ENCODE measurements at regions of chr14 and their contacts with region 1.

Region 1: GRCh38 chr14:85463512-85463911 is 66.4 kb upstream of the FLRT2 start:
- DNase-seq: no peak
- H3K4me3 ChIP-seq: no peak overlapping the region
- H3K27ac ChIP-seq: no peak overlapping the region
- H3K4me1 ChIP-seq: no peaks in the 10 kb centered on the region
- H3K27me3 ChIP-seq: no peaks in the 10 kb centered on the region
- CTCF ChIP-seq: no peak
- POLR2A ChIP-seq: no peak

Region 2: GRCh38 chr14:85415015-85415712 is 48.3 kb before region 1 on chr14:
- intact Hi-C with region 1: no loop called
- DNase-seq: peak in 1 of 2 donors; percentile 65
- H3K4me3 ChIP-seq: peak overlapping the region in 2 of 3 donors; percentile 27 to 34
- H3K27ac ChIP-seq: peak overlapping the region; percentile 50 to 74
- H3K4me1 ChIP-seq: no peaks in the 10 kb centered on the region
- H3K27me3 ChIP-seq: no peaks in the 10 kb centered on the region
- CTCF ChIP-seq: peak in 2 of 3 donors; percentile 11 to 31
- POLR2A ChIP-seq: no peak

Region 3: GRCh38 chr14:85508863-85509262 is 45.4 kb after region 1 on chr14:
- intact Hi-C with region 1: no loop called
- DNase-seq: no peak
- H3K4me3 ChIP-seq: no peak overlapping the region
- H3K27ac ChIP-seq: no peak overlapping the region
- H3K4me1 ChIP-seq: no peaks in the 10 kb centered on the region
- H3K27me3 ChIP-seq: no peaks in the 10 kb centered on the region
- CTCF ChIP-seq: no peak
- POLR2A ChIP-seq: no peak

Region 4: GRCh38 chr14:85542623-85543022 is 79.1 kb after region 1 on chr14:
- intact Hi-C with region 1: no loop called
- DNase-seq: no peak
- H3K4me3 ChIP-seq: no peak overlapping the region
- H3K27ac ChIP-seq: no peak overlapping the region
- H3K4me1 ChIP-seq: no peaks in the 10 kb centered on the region
- H3K27me3 ChIP-seq: no peaks in the 10 kb centered on the region
- CTCF ChIP-seq: no peak
- POLR2A ChIP-seq: no peak

Region 5: DNA sequence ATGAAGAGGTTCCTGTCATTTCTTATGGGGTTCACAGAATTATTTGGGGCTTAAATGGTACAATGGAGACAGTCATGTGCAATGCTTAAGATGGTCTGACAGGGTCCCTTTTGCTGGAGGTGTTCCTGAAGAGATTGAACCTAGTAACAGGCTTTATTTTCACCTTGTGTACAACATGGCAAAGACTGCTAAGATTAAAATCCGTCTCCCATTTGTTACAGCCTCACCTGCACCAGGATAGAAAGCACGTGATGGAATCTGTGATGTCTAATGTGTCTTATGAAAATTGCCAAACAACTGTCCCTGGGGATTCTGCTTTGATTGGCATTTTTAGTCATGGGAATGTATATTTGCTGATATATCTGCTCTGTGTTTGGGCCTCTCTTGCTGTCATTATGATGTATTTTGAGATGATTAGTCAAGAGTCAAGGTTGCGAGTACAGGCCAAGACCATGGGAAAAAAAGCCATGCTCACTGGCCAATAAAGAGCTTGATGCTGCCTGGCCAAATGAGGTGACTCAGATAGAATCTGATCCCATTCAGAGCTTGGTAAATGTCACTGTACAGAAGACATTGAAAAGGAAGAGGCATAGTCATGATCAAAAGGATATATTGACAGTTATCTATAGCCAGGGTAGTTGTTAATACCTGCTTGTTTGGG is 162.5 kb after region 1 on chr14:
- intact Hi-C with region 1: loop called (anchors 5 kb)
- DNase-seq: no peak
- H3K4me3 ChIP-seq: no peak overlapping the region
- H3K27ac ChIP-seq: no peak overlapping the region
- H3K4me1 ChIP-seq: no peaks in the 10 kb centered on the region
- H3K27me3 ChIP-seq: no peaks in the 10 kb centered on the region
- CTCF ChIP-seq: no peak
- POLR2A ChIP-seq: no peak